Activated T-helper 1 cell treated with anti-CD3 and anti-CD28 coated beads, Interleukin-12 subunit alpha, Interleukin-12 subunit beta, Interleukin-2, Interleukin-4 antibody, amounts not matched to agents 30 ng/mL and 10 ng/mL and 1 ng/mL, durations not matched to agents 14 hours and 24 hours and 36 hours (primary cell): ENCODE measurements at regions of chr12 and their contacts with region 1.

Region 1: DNA sequence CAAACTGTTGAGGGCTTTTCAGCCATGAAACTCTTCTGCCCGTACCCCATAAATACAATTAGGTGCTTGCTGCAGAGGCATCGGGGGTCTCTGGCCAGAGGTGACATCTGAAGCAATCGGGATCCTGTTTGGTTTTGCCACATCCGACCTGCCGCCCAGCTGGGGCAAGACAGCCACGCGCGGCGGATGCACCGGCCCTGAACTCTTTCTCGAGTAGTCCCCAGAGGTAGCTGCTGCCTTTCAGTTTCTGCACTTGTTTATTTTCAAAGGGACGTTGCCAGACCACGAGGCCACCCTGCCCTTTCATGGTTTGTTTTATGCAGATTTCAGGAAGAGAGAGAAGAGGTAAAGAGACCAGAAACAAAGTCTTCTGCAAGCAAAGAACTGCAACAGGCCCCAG is 10.6 kb upstream of the MLXIP start:
- DNase-seq: peak; percentile 33
- H3K4me3 Mint-ChIP-seq: peak overlapping the region; percentile 73
- H3K27ac Mint-ChIP-seq: peak overlapping the region; percentile 46
- H3K4me1 Mint-ChIP-seq: peaks cover 24% of the 10 kb centered on the region
- H3K27me3 Mint-ChIP-seq: peaks cover 12% of the 10 kb centered on the region

Region 2: GRCh38 chr12:121712461-121713256 is 355.3 kb before region 1 on chr12 and contains the start of gene TMEM120B:
- intact Hi-C with region 1: no loop called
- DNase-seq: peak; percentile 83
- H3K4me3 Mint-ChIP-seq: peak within 1 kb of the TSS; percentile 97
- H3K27ac Mint-ChIP-seq: peak within 1 kb of the TSS; percentile 91
- H3K4me1 Mint-ChIP-seq: peaks cover 28% of the 10 kb centered on the region
- H3K27me3 Mint-ChIP-seq: peaks cover 4% of the 10 kb centered on the region
- total RNA-seq, gene TMEM120B: 17.5 and 18.3 TPM in 2 replicates

Region 3: DNA sequence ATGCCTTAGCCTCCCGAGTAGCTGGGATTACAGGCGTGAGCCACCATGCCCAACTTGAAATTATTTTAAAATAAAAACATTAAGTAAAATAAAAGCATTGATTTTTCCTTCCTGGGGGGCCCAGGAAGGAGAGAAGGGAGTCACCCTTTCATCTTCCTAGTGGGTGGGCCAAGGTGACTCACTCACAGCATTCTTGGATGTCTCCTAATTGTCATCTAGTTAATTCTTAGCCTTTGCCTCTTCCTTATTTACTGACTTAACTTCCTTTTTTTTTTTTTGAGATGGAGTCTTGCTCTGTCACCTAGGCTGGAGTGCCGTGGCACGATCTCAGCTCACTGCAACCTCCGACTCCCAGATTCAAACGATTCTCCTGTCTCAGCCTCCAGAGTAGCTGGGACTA is 326.2 kb before region 1 on chr12:
- intact Hi-C with region 1: no loop called
- DNase-seq: no peak
- H3K4me3 Mint-ChIP-seq: no peak overlapping the region
- H3K27ac Mint-ChIP-seq: no peak overlapping the region
- H3K4me1 Mint-ChIP-seq: no peaks in the 10 kb centered on the region
- H3K27me3 Mint-ChIP-seq: no peaks in the 10 kb centered on the region

Region 4: DNA sequence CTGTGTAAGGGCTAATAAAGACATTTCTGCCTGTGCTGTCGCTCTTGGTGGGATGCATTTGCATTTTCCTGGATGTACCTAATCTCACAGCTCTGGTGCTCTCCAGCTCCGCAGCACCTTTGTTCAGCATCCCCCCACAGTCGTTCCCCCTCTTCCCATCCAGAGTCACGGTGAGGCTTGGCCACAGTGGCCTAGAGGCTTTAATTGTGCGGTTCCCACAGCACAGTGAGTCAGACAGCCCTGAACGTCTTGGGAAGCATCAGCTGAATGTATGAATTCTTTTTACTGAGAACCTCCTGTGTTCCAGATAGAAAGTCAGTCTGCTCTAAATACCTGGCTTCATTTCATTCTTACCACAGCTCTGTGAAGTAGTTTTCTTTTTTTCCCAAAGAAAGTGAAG is 39.3 kb after region 1 on chr12:
- intact Hi-C with region 1: loop called (anchors 5 kb)
- DNase-seq: no peak
- H3K4me3 Mint-ChIP-seq: no peak overlapping the region
- H3K27ac Mint-ChIP-seq: no peak overlapping the region
- H3K4me1 Mint-ChIP-seq: peaks cover 62% of the 10 kb centered on the region
- H3K27me3 Mint-ChIP-seq: no peaks in the 10 kb centered on the region